Prostate gland (tissue), 2 donors: ENCODE measurements at regions of chr9 and their contacts with region 1.

Region 1: DNA sequence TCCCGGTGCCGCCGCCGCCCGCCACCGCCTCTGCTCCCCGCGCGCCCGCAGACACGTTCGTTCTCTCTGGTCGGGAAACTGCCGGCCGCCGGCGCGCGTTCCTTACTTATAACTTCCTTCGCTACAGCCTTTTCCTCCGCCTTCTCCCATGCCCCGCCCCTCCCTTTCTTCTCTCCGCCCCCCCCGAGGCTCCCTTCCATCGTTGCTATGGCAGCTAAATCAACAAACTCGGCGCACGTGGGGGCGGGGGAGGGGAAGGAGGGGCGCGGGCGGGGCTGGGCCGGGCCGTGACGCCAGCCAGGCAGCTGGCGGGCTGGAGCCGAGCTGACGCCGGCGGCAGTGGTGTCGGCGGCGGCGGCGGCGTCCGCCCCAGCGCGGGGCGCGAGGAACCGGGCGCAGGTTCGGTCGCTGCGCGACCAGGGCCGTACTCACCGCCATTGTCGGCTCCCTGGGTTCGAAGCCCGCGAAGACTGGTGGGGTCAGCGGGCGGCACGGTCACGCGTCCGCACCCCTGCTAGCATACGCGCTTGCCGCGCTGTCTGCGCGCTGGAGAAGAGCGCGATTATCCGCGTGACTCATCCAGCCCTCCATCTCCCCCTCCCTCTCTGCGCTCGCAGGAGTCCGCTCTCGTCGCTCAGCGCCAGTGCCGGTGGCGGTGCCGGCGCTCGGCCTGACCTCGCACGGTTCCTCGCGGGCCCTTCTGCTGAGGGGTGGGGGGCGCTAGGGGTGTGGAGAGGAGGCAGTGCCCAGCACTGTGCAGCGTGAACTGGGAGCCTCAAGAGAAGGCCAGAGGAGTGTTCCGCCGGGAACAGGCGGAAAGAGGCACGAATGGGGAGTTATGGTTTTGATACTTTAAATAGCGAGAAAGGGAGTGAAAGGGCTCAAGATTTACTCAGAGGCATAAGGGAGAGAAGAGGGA is at the start of gene KLF4:
- DNase-seq: peak; percentile 96
- H3K4me3 ChIP-seq: peak within 1 kb of the TSS; percentile 66 to 95
- H3K27ac ChIP-seq: peak within 1 kb of the TSS; percentile 93 to 95
- H3K4me1 ChIP-seq: peaks cover 4% of the 10 kb centered on the region
- H3K27me3 ChIP-seq: no peaks in the 10 kb centered on the region
- CTCF ChIP-seq: peak in 1 of 4 experiments; percentile 22
- POLR2A ChIP-seq: peak; percentile 61
- total RNA-seq, gene KLF4: 41.4 to 50.0 TPM

Region 2: GRCh38 chr9:107631788-107632187 is 141.8 kb after region 1 on chr9:
- intact Hi-C with region 1: no loop called
- DNase-seq: no peak
- H3K4me3 ChIP-seq: no peak overlapping the region
- H3K27ac ChIP-seq: no peak overlapping the region
- H3K4me1 ChIP-seq: no peaks in the 10 kb centered on the region
- H3K27me3 ChIP-seq: no peaks in the 10 kb centered on the region
- CTCF ChIP-seq: no peak
- POLR2A ChIP-seq: no peak

Region 3: DNA sequence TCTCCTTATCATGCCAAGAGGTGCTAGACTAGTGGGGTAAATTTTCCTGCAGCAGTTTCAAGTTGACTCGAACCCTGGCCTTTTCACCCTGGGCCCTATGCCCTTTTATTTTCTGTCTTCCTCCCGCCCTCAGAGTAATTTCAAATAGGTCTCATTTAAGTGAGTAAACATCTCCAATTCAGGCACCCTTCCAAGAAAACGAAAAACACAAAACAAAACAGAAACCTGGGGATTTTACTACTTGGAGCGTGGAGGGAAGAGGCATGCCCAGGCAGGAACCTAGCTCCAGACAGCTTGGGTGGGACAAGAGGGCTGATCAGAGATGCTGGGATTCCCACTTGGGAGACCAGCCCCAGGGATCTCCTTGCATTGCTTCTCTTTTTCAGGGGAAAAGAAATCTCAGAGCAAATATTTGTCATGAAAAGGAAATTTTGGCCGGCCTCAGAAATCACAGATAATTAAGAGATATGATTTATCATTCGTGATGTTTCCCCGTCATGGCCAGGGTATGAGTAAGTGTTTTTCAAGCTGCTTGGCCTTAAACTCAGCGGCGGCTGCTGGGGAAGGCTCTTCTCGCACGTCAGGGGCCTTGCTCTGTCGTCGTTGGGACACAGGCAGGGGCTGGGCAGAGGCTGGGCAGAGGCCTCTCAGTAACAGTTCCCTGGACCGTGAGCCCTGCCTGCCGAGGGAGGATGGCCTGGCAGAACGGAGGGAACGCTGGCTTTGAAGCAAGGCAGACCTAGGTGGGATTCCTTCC is 248.2 kb after region 1 on chr9:
- intact Hi-C with region 1: loop called (anchors 5 kb)
- DNase-seq: peak; percentile 63
- H3K4me3 ChIP-seq: no peak overlapping the region
- H3K27ac ChIP-seq: peak overlapping the region in 1 of 2 donors; percentile 53
- H3K4me1 ChIP-seq: peaks cover 8% of the 10 kb centered on the region
- H3K27me3 ChIP-seq: no peaks in the 10 kb centered on the region
- CTCF ChIP-seq: no peak
- POLR2A ChIP-seq: no peak

Region 4: GRCh38 chr9:107760454-107761237 is 270.7 kb after region 1 on chr9:
- intact Hi-C with region 1: no loop called
- DNase-seq: no peak
- H3K4me3 ChIP-seq: no peak overlapping the region
- H3K27ac ChIP-seq: no peak overlapping the region
- H3K4me1 ChIP-seq: no peaks in the 10 kb centered on the region
- H3K27me3 ChIP-seq: no peaks in the 10 kb centered on the region
- CTCF ChIP-seq: no peak
- POLR2A ChIP-seq: no peak

Region 5: DNA sequence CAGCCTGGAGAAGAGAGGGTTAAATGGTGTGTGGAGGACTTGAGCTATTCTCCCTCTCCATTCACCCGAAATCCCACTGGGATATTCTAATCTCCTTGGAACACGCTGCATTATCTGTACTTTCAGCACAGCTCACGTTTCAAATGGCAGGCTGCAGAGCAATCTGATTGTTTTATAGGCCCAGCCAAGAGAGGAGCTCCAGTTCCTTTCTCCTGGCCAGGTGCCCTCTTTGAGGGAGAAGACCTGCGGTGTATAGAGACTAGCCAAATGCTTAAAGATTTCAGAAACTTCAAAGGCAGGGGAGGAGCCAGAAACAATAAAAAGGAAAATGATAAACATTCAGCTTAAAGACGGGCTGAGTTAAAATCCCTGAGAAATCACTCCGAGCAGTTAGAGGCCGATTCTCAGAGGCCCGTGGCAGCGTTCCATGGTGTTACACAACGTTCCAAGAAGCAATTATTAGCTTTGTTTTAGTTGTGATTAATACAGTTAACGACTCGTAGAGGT is 563.7 kb after region 1 on chr9:
- intact Hi-C with region 1: loop called (anchors 5 kb)
- DNase-seq: peak; percentile 88
- H3K4me3 ChIP-seq: no peak overlapping the region
- H3K27ac ChIP-seq: peak overlapping the region; percentile 2 to 10
- H3K4me1 ChIP-seq: peaks cover 3% of the 10 kb centered on the region
- H3K27me3 ChIP-seq: no peaks in the 10 kb centered on the region
- CTCF ChIP-seq: no peak
- POLR2A ChIP-seq: no peak

Region 6: DNA sequence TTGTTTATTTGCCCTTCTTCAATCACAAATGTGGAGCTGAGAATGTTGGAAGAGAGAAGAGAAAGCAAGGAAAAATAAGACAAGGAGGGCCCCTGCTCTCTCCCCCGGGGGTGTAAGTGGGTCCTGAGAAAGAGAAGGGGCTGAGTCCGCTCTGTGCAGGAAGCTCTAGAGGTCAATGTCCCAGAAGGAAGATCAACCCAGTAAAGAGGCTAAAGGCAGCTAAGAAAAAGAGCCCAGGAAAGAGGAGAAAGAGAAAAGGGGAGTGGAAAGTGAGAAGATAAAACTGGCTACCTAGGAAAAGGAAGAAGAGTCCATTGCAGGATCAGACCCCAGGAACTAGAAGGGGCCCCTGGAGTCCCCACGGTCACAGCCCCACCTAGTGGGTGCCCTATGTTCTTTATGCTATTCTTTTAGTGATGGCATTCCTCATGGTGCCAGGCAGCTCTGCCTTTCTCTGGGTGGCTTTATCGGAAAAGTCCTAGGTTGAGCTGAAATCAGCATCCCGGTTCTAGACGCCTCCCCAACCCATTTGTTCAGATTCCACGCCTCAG is 782.5 kb after region 1 on chr9:
- intact Hi-C with region 1: loop called (anchors 5 kb)
- DNase-seq: peak; percentile 49
- H3K4me3 ChIP-seq: peak overlapping the region; percentile 4 to 20
- H3K27ac ChIP-seq: peak overlapping the region; percentile 82 to 85
- H3K4me1 ChIP-seq: no peaks in the 10 kb centered on the region
- H3K27me3 ChIP-seq: no peaks in the 10 kb centered on the region
- CTCF ChIP-seq: peak; percentile 63 to 72 (median 65)
- POLR2A ChIP-seq: no peak

Region 7: GRCh38 chr9:108761655-108762347 is 1271.9 kb after region 1 on chr9:
- intact Hi-C with region 1: loop called (anchors 5 kb)
- DNase-seq: peak; percentile 60
- H3K4me3 ChIP-seq: no peak overlapping the region
- H3K27ac ChIP-seq: no peak overlapping the region
- H3K4me1 ChIP-seq: no peaks in the 10 kb centered on the region
- H3K27me3 ChIP-seq: no peaks in the 10 kb centered on the region
- CTCF ChIP-seq: peak; percentile 60 to 86 (median 82)
- POLR2A ChIP-seq: no peak